CD4-positive, alpha-beta memory T cell (primary cell): ENCODE measurements at regions of chr4 and their contacts with region 1.

Region 1: DNA sequence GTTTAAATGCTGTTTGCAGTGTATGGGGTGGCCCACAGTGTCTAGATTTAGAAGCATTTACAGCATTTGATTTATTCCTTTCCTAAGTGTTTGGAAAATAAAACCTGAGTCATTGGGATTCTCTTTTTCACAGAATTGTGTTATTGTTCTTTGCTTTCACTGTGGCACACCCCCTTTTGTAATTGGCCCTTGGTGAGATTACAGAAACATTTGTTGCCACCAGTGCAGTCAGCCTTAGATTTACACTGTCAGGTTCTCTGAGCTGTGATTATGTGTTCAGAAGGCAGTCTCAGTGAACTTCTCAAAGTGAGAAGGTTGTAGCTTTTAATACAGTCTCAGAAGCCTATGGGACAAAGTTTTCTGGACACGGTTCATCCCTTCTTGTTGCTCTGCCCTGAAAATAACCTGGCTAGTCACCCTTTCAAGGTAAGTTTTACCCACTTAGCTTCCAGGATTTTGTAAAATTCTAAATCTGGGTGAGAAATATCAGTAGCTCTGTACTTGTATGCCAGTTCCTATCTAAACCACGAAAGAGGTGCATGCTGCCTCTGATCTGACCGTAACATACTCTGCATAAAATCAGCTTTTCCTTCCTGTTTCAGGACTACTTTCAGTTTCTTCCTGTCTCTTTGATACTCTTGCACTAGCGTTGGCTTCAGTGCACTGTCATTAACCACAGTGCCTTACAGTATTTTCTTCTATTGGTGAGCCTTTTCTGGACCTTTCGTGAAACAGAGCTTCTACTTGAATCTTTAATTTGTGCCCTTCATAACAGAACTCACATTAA is 12.6 kb downstream of the RUFY3 start:
- DNase-seq: peak; percentile 59 to 73 (median 66)
- H3K4me3 ChIP-seq: peak overlapping the region; percentile 15 to 46
- H3K4me3 Mint-ChIP-seq: peak overlapping the region; percentile 67 to 88 (median 80)
- H3K27ac ChIP-seq: peak overlapping the region; percentile 71
- H3K27ac Mint-ChIP-seq: peak overlapping the region; percentile 63 to 96 (median 88)
- H3K4me1 ChIP-seq: peaks cover 49% of the 10 kb centered on the region
- H3K4me1 Mint-ChIP-seq: peaks cover 31 to 50% (median 42%) of the 10 kb centered on the region in 4 donors
- H3K27me3 ChIP-seq: no peaks in the 10 kb centered on the region
- H3K27me3 Mint-ChIP-seq: no peaks in the 10 kb centered on the region

Region 2: GRCh38 chr4:70601422-70602039 is 132.8 kb before region 1 on chr4:
- CTCF ChIA-PET with region 1: interaction called, 4 read pairs
- POLR2A ChIA-PET with region 1: no interaction called
- intact Hi-C with region 1: loop called (anchors 1 kb)
- DNase-seq: peak; percentile 61 to 65 (median 64)
- H3K4me3 ChIP-seq: no peak overlapping the region
- H3K4me3 Mint-ChIP-seq: no peak overlapping the region
- H3K27ac ChIP-seq: no peak overlapping the region
- H3K27ac Mint-ChIP-seq: no peak overlapping the region
- H3K4me1 ChIP-seq: no peaks in the 10 kb centered on the region
- H3K4me1 Mint-ChIP-seq: no peaks in the 10 kb centered on the region
- H3K27me3 ChIP-seq: no peaks in the 10 kb centered on the region
- H3K27me3 Mint-ChIP-seq: peaks cover 2 to 6% of the 10 kb centered on the region in 2 donors

Region 3: GRCh38 chr4:70687821-70688794 is 46.3 kb before region 1 on chr4 and contains the start of gene UTP3:
- CTCF ChIA-PET with region 1: interaction called, 73 read pairs
- POLR2A ChIA-PET with region 1: interaction called, 59 read pairs
- intact Hi-C with region 1: loop called (anchors 1 kb)
- DNase-seq: peak; percentile 93 to 95 (median 94)
- H3K4me3 ChIP-seq: peak within 1 kb of the TSS; percentile 70 to 99
- H3K4me3 Mint-ChIP-seq: peak within 1 kb of the TSS; percentile 92 to 100 (median 97)
- H3K27ac ChIP-seq: peak within 1 kb of the TSS; percentile 94
- H3K27ac Mint-ChIP-seq: peak within 1 kb of the TSS; percentile 95 to 100 (median 99)
- H3K4me1 ChIP-seq: peaks cover 37% of the 10 kb centered on the region
- H3K4me1 Mint-ChIP-seq: peaks cover 24 to 42% (median 35%) of the 10 kb centered on the region in 4 donors
- H3K27me3 ChIP-seq: no peaks in the 10 kb centered on the region
- H3K27me3 Mint-ChIP-seq: no peaks in the 10 kb centered on the region
- total RNA-seq, gene UTP3: 43.2 to 45.3 TPM

Region 4: GRCh38 chr4:70749313-70749712 is 15.0 kb after region 1 on chr4:
- CTCF ChIA-PET with region 1: interaction called, 20 read pairs
- POLR2A ChIA-PET with region 1: interaction called, 4 read pairs
- intact Hi-C with region 1: loop called (anchors 2 kb)
- DNase-seq: no peak
- H3K4me3 ChIP-seq: no peak overlapping the region
- H3K4me3 Mint-ChIP-seq: no peak overlapping the region
- H3K27ac ChIP-seq: no peak overlapping the region
- H3K27ac Mint-ChIP-seq: no peak overlapping the region
- H3K4me1 ChIP-seq: no peaks in the 10 kb centered on the region
- H3K4me1 Mint-ChIP-seq: peaks cover 7 to 11% (median 9%) of the 10 kb centered on the region in 4 donors
- H3K27me3 ChIP-seq: no peaks in the 10 kb centered on the region
- H3K27me3 Mint-ChIP-seq: no peaks in the 10 kb centered on the region

Region 5: GRCh38 chr4:70802928-70803580 is 68.7 kb after region 1 on chr4:
- CTCF ChIA-PET with region 1: interaction called, 18 read pairs
- POLR2A ChIA-PET with region 1: interaction called, 6 read pairs
- intact Hi-C with region 1: no loop called
- DNase-seq: no peak
- H3K4me3 ChIP-seq: no peak overlapping the region
- H3K4me3 Mint-ChIP-seq: no peak overlapping the region
- H3K27ac ChIP-seq: no peak overlapping the region
- H3K27ac Mint-ChIP-seq: peak overlapping the region in 1 of 7 donors; percentile 25
- H3K4me1 ChIP-seq: no peaks in the 10 kb centered on the region
- H3K4me1 Mint-ChIP-seq: peaks cover 7 to 11% (median 11%) of the 10 kb centered on the region in 4 donors
- H3K27me3 ChIP-seq: no peaks in the 10 kb centered on the region
- H3K27me3 Mint-ChIP-seq: no peaks in the 10 kb centered on the region

Region 6: DNA sequence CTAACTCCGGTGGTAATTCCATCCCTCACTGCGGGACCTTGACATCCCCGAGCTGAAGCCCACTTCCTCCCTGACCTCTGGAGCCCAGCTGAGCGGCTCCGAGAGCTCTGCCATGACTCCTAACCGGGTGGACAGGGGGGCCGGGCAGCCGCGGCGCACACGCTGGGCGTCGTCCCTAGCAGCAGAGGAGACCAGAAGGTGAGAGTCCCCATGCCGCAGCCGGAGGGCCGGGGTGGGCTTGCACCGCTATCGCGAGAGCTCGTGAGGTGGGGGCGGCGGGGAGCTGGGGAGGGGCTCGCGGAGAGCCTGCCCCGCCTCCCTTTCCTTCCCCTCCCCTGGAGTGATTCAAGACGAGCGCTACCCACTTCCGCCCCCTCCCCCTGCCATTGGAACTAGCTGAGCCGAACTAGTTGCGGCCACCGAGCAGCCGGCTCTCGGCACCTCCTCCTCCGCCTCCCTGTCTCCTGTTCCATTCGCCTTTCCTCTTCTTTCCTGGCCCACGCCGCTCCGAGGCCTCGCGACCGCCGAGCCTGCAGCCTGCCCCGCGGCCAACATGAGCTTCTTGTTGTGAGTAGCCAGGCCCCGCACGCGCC is 167.7 kb after region 1 on chr4 and contains the start of gene MOB1B:
- CTCF ChIA-PET with region 1: interaction called, 23 read pairs
- POLR2A ChIA-PET with region 1: interaction called, 11 read pairs
- intact Hi-C with region 1: loop called (anchors 1 kb)
- DNase-seq: peak; percentile 81 to 88 (median 82)
- H3K4me3 ChIP-seq: peak within 1 kb of the TSS; percentile 79 to 95
- H3K4me3 Mint-ChIP-seq: peak within 1 kb of the TSS; percentile 97 to 99 (median 98)
- H3K27ac ChIP-seq: peak within 1 kb of the TSS; percentile 71
- H3K27ac Mint-ChIP-seq: peak within 1 kb of the TSS; percentile 49 to 94 (median 92)
- H3K4me1 ChIP-seq: peaks cover 17% of the 10 kb centered on the region
- H3K4me1 Mint-ChIP-seq: peaks cover 17 to 41% (median 26%) of the 10 kb centered on the region in 4 donors
- H3K27me3 ChIP-seq: no peaks in the 10 kb centered on the region
- H3K27me3 Mint-ChIP-seq: peaks cover 0 to 1% of the 10 kb centered on the region in 2 donors
- total RNA-seq, gene MOB1B: 10.2 to 10.8 TPM